ENCODE measurements at regions of chr22 and their contacts with region 1.

Region 1: DNA sequence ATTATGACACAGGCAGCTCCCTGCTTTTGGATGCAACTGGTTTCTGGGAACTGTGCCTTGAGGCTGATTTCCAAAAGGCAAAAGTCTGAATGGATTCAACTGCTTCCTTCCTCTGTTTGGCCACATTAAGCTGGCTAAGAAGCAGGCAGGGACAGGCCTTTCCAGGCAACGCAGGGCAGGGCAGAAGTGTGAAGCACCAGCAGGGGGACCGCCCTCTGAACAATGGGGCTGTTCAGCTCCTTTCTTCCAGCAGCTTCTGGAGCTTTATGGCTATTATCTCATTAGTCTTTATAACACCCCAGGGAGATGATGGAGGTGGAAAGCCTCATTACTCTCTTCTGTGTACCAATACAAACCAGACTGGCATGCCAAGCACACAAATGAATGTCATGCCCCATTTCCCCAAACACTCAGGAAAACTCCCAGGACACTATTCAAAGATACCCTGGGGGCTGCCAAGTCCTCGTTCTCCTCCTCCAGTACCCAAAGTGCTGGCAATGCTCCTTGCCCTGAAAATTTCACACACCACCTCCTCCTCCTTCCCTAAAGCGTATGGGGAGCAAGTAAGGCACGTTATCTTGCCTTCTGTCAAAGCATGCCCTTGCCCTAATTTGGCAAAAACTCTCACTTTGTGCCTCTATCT is 21.3 kb downstream of the MORC2 start:
- DNase-seq: no peak
- H3K4me3 Mint-ChIP-seq: no peak overlapping the region
- H3K27ac Mint-ChIP-seq: no peak overlapping the region
- H3K4me1 Mint-ChIP-seq: peaks cover 70% of the 10 kb centered on the region
- H3K27me3 Mint-ChIP-seq: no peaks in the 10 kb centered on the region

Region 2: GRCh38 chr22:31080848-31081649 is 133.8 kb after region 1 on chr22 and contains the start of gene SMTN:
- CTCF ChIA-PET with region 1: interaction called, 13 read pairs
- DNase-seq: peak; percentile 94
- H3K4me3 Mint-ChIP-seq: peak within 1 kb of the TSS; percentile 89
- H3K27ac Mint-ChIP-seq: peak within 1 kb of the TSS; percentile 74
- H3K4me1 Mint-ChIP-seq: peaks cover 44% of the 10 kb centered on the region
- H3K27me3 Mint-ChIP-seq: peaks cover 18% of the 10 kb centered on the region

Measured in activated naive CD4-positive, alpha-beta T cell treated with anti-CD3 and anti-CD28 coated beads, Interleukin-2, amount 10 ng/mL, durations not matched to agents 7 days and 5 days (primary cell).